ENCODE measurements at regions of chr15 and their contacts with region 1.

Region 1: GRCh38 chr15:64775551-64776401 is at the start of gene RBPMS2:
- DNase-seq: no peak
- H3K4me3 ChIP-seq: peak within 1 kb of the TSS; percentile 63 to 97 (median 71)
- H3K27ac ChIP-seq: peak within 1 kb of the TSS; percentile 57 to 74
- H3K4me1 ChIP-seq: peaks cover 0 to 6% of the 10 kb centered on the region in 2 donors
- H3K27me3 ChIP-seq: no peaks in the 10 kb centered on the region
- CTCF ChIP-seq: no peak
- POLR2A ChIP-seq: no peak
- total RNA-seq, gene RBPMS2: 0.66 to 1.9 TPM in 2 of 3 donors, not detected in the other

Region 2: DNA sequence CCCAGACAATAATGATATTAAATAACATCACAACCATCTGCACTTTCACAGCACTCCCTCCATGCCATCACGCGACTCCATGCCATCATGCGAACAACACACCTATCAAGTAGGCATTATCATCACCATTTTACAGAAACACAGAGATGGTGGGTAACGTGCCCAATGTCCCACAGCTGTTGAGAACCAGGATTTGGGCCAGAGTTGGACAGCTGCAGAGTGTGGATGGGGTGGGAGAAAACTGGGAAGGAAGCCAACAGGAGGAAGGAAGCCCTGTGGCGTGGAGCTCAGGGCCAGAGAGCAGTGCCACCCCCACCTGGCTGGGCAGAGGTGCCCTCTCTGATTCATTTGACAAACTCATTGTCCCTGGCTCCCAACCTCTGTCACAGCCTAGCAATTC is 29.4 kb before region 1 on chr15:
- intact Hi-C with region 1: loop called (anchors 1 kb)
- DNase-seq: no peak
- H3K4me3 ChIP-seq: no peak overlapping the region
- H3K27ac ChIP-seq: no peak overlapping the region
- H3K4me1 ChIP-seq: no peaks in the 10 kb centered on the region
- H3K27me3 ChIP-seq: no peaks in the 10 kb centered on the region
- CTCF ChIP-seq: no peak
- POLR2A ChIP-seq: no peak

Region 3: GRCh38 chr15:65020419-65020818 is 244.6 kb after region 1 on chr15:
- intact Hi-C with region 1: no loop called
- DNase-seq: no peak
- H3K4me3 ChIP-seq: no peak overlapping the region
- H3K27ac ChIP-seq: no peak overlapping the region
- H3K4me1 ChIP-seq: no peaks in the 10 kb centered on the region
- H3K27me3 ChIP-seq: no peaks in the 10 kb centered on the region
- CTCF ChIP-seq: no peak
- POLR2A ChIP-seq: no peak